Left ventricle myocardium superior (tissue), 1 donor: ENCODE measurements at regions of chr3 and their contacts with region 1.

Region 1: DNA sequence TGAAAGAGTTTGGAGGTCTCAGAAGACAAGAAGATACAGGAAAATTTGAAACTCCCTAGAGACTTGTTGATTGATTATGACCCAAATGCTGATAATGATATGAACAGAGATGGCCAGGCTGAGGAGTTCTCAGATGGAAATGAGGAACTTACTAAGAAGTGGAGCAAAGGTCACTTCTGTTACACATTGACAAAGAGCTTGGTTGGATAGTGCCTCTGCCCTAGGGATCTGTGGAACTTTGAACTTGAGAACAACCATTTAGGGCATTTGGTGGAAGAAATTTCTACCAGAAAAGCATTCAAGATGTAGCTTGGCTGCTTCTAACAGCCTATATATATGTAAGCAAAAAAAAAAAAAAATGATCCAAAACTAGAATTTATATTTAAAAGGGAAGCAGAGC is 48.9 kb upstream of the NAALADL2 start:
- DNase-seq: no peak
- ATAC-seq: no peak

Region 2: DNA sequence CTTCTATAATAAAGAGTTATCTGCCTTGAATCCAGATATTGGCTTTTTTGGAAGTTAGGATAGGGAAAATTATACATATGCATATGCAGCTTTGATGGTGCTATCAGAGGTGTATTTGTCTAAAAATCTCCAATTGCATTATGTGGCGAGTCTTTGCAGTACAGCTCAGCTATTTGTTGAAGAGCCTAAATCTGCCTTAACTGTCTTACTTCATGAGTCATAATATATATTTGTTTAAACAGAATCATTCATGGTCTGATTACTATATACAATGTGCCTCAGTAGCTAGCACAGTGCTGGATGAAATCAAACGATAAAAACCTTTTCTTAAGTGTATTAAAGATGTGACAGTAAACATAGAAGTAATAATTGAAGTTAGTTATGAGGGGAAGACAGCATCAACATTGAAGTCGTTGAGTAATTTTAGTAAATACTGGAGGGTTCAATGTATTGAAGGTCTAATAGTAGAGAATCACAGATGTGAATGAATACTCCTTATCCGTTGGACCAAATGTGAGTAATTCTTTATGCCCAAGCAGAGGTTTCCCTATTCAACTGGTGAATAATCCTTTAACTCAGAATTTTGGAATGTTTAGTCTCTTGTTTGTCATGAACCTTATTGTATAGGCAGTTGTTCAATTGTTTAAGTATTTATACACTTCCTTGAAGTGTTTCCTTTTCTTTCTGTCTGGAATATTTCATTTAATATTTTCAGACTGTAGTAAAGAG is 25.9 kb before region 1 on chr3:
- intact Hi-C with region 1: loop called (anchors 1 kb)
- DNase-seq: no peak
- ATAC-seq: no peak